HEK293 (cell line): ENCODE measurements at regions of chr6 and their contacts with region 1.

Region 1: GRCh38 chr6:87822011-87822410 is 120.0 kb upstream of the AKIRIN2 start:
- H3K4me3 ChIP-seq: no peak overlapping the region
- H3K27ac ChIP-seq: no peak overlapping the region
- H3K4me1 ChIP-seq: no peaks in the 10 kb centered on the region
- CTCF ChIP-seq: no peak

Region 2: GRCh38 chr6:87832025-87832825 is 10.2 kb after region 1 on chr6:
- CTCF ChIA-PET with region 1: interaction called, 11 read pairs
- POLR2A ChIA-PET with region 1: no interaction called
- H3K4me3 ChIP-seq: peak overlapping the region; percentile 26
- H3K27ac ChIP-seq: 0 out of 2 replicates have a peak overlapping the region, but pooled peaks have one; percentile 25
- H3K4me1 ChIP-seq: peaks cover 15% of the 10 kb centered on the region
- CTCF ChIP-seq: no peak

Region 3: DNA sequence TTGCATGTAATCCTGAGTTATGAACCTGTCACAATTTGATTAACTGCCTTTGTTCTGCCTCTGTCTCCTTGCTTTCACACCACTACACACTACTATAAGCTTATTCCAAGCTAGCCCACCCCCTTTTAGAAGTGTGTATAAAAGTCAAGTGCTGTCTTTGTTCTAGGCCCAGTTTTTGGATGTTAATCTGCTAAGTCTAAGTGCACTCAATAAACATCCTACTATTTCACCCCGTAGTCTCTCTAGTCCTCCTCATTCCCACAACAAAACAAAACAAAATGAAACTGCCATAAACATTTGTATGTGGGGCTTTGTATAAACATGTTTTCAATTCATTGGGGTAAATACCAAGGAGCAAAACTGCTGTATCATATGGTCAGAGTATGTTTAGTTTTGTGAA is 209.5 kb after region 1 on chr6:
- CTCF ChIA-PET with region 1: no interaction called
- POLR2A ChIA-PET with region 1: no interaction called
- H3K4me3 ChIP-seq: no peak overlapping the region
- H3K27ac ChIP-seq: no peak overlapping the region
- H3K4me1 ChIP-seq: no peaks in the 10 kb centered on the region
- CTCF ChIP-seq: no peak